ENCODE measurements at regions of chr17 and their contacts with region 1.

Region 1: GRCh38 chr17:76278952-76279741 is 14.0 kb downstream of the UBALD2 start:
- DNase-seq: peak; percentile 73 to 98
- H3K4me3 ChIP-seq: no peak overlapping the region
- H3K27ac ChIP-seq: no peak overlapping the region
- H3K4me1 ChIP-seq: peaks cover 0 to 4% (median under 1%) of the 10 kb centered on the region in 4 experiments; a peak in 3 of 7 replicates
- H3K27me3 ChIP-seq: no peaks in the 10 kb centered on the region
- CTCF ChIP-seq: peak; percentile 84 to 97 (median 94)
- EP300 ChIP-seq: no peak
- POLR2A ChIP-seq: no peak
- RAD21 ChIP-seq: peak; percentile 95 to 99

Region 2: DNA sequence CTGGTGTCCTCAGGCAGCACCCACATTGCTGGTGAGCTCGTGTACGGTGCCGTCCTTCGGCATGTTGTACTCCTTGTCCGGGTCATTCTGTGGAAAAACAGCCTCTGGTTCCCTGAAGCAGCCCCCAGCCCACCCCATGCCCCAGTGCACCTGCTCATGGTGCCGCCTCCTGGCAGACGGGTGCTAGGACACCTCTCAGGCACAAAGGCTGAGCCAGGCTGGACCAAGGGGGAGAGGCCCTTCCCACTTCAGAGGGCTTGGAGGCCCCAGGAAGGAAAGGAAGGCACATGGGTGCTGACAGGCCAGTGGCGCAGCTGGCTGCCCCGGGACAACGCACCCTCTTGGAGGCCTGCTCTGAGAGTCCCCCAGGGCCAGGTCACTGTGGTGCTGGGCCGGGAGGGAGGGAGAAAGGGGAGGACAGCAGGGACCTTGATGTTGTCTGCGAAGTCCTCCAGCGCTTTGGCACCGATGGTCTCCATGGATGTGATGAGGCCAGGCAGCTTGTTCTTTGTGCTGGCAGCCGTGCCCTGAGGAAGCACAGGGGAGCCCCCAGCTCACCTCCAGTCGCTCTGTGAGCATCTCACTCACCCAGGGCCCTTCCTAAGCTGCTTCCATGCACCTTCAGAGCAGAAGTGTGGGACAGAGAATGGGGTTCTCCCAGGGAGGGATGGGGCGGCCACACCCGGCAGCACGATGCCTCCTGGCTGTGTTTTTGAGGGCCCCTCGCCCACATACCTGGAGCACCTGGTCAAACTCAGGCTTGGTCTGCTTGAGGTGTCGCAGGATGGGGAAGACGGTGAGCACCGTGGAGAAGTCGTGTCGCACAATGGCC is 190.9 kb before region 1 on chr17:
- CTCF ChIA-PET with region 1: interaction called, 10 read pairs
- POLR2A ChIA-PET with region 1: no interaction called
- DNase-seq: peak in 1 of 2 experiments; percentile 72
- H3K4me3 ChIP-seq: no peak overlapping the region
- H3K27ac ChIP-seq: no peak overlapping the region
- H3K4me1 ChIP-seq: no peaks in the 10 kb centered on the region
- H3K27me3 ChIP-seq: no peaks in the 10 kb centered on the region
- CTCF ChIP-seq: peak; percentile 60 to 74 (median 63)
- EP300 ChIP-seq: no peak
- POLR2A ChIP-seq: no peak
- RAD21 ChIP-seq: peak; percentile 40 to 56

Region 3: GRCh38 chr17:76121932-76122430 is 157.2 kb before region 1 on chr17:
- CTCF ChIA-PET with region 1: interaction called, 77 read pairs
- POLR2A ChIA-PET with region 1: interaction called, 4 read pairs
- DNase-seq: peak in 1 of 2 experiments; percentile 79
- H3K4me3 ChIP-seq: peak overlapping the region in 3 of 4 experiments; percentile 1 to 48 (median 10); a peak in 5 of 8 replicates
- H3K27ac ChIP-seq: no peak overlapping the region
- H3K4me1 ChIP-seq: peaks cover 7 to 32% (median 19%) of the 10 kb centered on the region in 4 experiments
- H3K27me3 ChIP-seq: peaks cover 0 to 13% (median 7%) of the 10 kb centered on the region in 4 experiments; a peak in 4 of 7 replicates
- CTCF ChIP-seq: no peak
- EP300 ChIP-seq: no peak
- POLR2A ChIP-seq: no peak
- RAD21 ChIP-seq: no peak

Region 4: DNA sequence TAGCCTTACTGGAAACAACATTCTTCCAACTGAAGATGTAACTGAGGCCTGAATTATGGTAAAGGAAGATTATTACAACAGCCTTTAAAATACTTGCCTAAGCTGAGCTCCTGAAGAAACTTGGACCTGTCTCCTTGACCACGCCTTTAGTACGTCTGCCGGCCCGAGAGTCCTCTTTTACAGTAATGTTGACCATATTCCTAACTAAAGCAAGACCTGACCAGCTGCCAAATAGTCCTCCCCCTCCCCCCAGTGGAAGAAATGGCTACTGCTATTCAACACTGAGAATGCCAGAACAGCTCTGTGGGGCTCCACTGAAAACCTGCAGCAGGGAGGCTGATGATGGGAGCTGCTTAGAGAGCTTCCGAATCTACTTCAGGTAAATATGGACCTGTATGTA is 125.5 kb before region 1 on chr17:
- CTCF ChIA-PET with region 1: interaction called, 30 read pairs
- POLR2A ChIA-PET with region 1: no interaction called
- DNase-seq: no peak
- H3K4me3 ChIP-seq: no peak overlapping the region
- H3K27ac ChIP-seq: no peak overlapping the region
- H3K4me1 ChIP-seq: peaks cover 0 to 13% (median 10%) of the 10 kb centered on the region in 4 experiments; a peak in 5 of 7 replicates
- H3K27me3 ChIP-seq: no peaks in the 10 kb centered on the region
- CTCF ChIP-seq: peak; percentile 28 to 58 (median 54)
- EP300 ChIP-seq: no peak
- POLR2A ChIP-seq: no peak
- RAD21 ChIP-seq: peak; percentile 63 to 73

Region 5: GRCh38 chr17:76223802-76224201 is 55.3 kb before region 1 on chr17:
- CTCF ChIA-PET with region 1: interaction called, 11 read pairs
- POLR2A ChIA-PET with region 1: no interaction called
- DNase-seq: peak in 1 of 2 experiments; percentile 1
- H3K4me3 ChIP-seq: no peak overlapping the region
- H3K27ac ChIP-seq: no peak overlapping the region
- H3K4me1 ChIP-seq: peaks cover 0 to 2% (median 0%) of the 10 kb centered on the region in 4 experiments; a peak in 1 of 7 replicates
- H3K27me3 ChIP-seq: no peaks in the 10 kb centered on the region
- CTCF ChIP-seq: no peak
- EP300 ChIP-seq: no peak
- POLR2A ChIP-seq: no peak
- RAD21 ChIP-seq: no peak

Region 6: DNA sequence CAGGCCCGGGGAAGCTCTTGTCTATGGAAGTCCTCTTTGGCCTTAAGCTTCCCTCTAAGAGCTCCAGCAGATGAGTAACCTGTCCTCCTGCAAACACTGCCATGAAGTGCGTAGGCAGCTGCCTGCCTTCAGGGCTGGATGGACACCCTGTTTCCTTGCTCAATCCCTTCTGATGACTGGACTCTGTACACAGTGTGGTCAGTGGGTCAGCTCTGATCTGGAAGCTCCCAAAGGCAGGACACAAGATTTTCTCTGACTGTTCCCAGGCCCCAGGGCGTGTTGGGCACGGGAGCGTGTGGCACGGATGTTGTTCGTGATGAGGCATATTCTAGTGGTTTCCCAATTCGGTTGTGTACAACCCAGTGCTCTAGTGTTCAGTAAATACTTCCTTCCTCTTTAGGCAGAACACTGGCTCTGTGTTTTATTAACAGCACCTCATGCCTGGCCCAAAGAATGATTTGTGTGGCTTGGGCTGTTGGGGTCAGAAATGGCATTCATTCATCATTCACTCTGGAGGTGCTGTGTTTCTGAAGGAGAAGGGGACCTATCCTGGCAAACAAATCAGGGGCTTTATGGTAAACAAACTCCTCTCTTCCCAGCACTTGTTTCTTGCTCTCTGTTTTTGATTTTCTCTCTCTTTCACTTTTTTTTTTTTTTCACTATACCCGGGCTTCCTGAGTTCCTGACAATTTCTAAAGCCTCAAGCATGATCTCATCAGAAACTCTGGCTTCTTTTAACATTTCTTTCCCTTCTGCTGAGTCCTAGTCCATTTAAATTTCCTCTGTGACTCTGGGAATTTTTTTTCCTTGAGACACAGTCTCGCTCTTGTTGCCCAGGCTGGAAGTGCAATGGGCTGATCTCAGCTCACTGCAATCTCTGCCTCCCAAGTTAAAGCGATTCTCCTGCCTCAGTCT is 26.9 kb before region 1 on chr17:
- CTCF ChIA-PET with region 1: interaction called, 18 read pairs
- POLR2A ChIA-PET with region 1: no interaction called
- DNase-seq: no peak
- H3K4me3 ChIP-seq: no peak overlapping the region
- H3K27ac ChIP-seq: no peak overlapping the region
- H3K4me1 ChIP-seq: no peaks in the 10 kb centered on the region
- H3K27me3 ChIP-seq: no peaks in the 10 kb centered on the region; a peak in 1 of 7 replicates
- CTCF ChIP-seq: no peak
- EP300 ChIP-seq: no peak
- POLR2A ChIP-seq: no peak
- RAD21 ChIP-seq: no peak

Region 7: DNA sequence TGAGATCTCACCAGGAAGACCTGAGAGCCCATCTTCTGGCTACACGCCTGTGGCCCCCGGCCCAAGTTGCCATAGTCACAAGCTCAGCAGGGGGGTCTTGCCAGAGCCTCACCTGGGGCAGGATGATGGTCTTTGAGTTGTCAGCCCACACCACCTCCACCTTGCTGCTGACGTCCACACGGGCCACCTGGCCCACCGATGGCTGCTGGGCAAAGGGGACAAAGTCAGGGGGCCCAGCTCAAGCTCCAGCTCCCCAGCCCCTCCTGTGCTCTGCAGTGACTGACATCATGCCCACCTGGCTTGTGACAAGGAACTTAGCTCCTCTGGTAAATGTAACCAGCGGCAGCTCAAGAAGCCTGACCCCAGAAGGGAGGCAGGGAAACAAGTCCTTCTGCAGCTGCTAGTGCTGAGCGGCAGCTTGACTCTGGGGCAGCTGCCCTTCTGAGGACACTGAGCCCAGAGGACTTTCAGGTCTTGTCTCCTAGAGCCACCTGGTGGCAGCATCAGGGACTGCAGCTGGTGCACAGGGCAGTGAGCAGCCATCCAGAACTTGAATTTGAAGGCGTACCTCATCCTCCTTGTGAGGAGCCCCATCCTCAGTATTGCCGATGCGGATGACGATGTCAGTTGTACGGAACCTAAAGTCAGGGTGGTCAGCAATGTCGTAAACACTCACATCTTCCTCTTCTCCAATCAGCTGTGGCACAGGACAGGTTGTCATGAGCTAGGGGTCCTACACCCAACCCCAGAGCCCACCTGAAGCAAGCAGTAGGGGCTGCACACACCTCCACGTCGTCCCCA is 118.7 kb after region 1 on chr17:
- CTCF ChIA-PET with region 1: interaction called, 13 read pairs
- POLR2A ChIA-PET with region 1: no interaction called
- DNase-seq: peak; percentile 81 to 98
- H3K4me3 ChIP-seq: no peak overlapping the region
- H3K27ac ChIP-seq: 0 out of 2 replicates have a peak overlapping the region, but pooled peaks have one; percentile 17
- H3K4me1 ChIP-seq: no peaks in the 10 kb centered on the region
- H3K27me3 ChIP-seq: no peaks in the 10 kb centered on the region
- CTCF ChIP-seq: peak; percentile 94 to 100 (median 94)
- EP300 ChIP-seq: no peak
- POLR2A ChIP-seq: no peak
- RAD21 ChIP-seq: peak; percentile 88 to 90

Region 8: DNA sequence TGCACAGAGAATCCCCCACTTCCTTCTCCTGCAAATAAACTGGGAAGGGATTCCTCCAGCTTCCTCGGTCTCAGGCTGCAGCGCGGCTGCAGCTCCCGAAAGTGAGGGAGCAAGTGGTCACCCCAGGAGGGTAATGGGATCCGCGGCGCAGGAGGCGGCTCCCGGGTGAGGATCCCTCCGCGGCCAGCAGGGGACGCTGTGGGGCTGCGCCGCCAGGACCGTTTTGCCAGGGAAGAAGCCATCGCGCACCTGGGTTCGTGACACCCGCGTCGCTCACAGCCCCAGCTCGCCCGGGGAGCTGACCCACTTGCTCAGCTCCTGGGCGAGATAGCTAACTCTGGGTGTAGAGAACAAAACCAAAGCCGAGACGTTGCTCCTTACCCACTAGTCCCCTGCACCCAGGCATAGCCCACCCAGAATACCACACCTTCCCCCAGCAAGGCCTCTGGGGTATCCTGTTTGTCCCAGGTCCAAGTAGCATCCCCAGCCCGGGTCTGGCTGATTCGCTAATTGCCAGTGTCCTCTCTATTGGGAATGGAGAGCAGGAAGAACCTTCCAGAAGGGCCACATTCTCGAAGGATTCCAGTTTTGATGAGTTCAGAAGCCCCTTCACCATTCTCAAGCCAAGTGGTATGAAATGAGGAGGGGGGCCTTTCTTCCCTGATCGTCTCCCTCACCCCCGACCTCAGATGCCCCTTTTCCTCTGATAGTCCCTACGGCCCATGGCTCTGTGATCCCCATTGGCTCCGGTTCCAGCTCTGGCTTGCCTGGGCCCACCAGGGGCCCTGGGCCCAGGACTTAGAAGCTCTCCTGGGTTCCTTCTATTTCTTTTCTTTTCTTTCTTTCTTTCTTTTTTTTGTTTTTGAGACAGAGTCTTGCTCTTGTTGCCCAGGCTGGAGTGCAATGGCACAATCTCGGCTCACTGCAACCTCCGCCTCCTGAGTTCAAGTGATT is 244.2 kb after region 1 on chr17:
- CTCF ChIA-PET with region 1: no interaction called
- POLR2A ChIA-PET with region 1: no interaction called
- DNase-seq: peak; percentile 49 to 96
- H3K4me3 ChIP-seq: no peak overlapping the region
- H3K27ac ChIP-seq: no peak overlapping the region
- H3K4me1 ChIP-seq: peaks cover 0 to 19% (median 10%) of the 10 kb centered on the region in 4 experiments; a peak in 6 of 7 replicates
- H3K27me3 ChIP-seq: peaks cover 0 to 5% (median 0%) of the 10 kb centered on the region in 4 experiments; a peak in 3 of 7 replicates
- CTCF ChIP-seq: peak; percentile 97 to 99 (median 99)
- EP300 ChIP-seq: peak in 1 of 2 experiments; percentile 43; a peak in 1 of 3 replicates
- POLR2A ChIP-seq: no peak
- RAD21 ChIP-seq: peak; percentile 91 to 92